CD8-positive, alpha-beta T cell (primary cell): ENCODE measurements at regions of chr6 and their contacts with region 1.

Region 1: DNA sequence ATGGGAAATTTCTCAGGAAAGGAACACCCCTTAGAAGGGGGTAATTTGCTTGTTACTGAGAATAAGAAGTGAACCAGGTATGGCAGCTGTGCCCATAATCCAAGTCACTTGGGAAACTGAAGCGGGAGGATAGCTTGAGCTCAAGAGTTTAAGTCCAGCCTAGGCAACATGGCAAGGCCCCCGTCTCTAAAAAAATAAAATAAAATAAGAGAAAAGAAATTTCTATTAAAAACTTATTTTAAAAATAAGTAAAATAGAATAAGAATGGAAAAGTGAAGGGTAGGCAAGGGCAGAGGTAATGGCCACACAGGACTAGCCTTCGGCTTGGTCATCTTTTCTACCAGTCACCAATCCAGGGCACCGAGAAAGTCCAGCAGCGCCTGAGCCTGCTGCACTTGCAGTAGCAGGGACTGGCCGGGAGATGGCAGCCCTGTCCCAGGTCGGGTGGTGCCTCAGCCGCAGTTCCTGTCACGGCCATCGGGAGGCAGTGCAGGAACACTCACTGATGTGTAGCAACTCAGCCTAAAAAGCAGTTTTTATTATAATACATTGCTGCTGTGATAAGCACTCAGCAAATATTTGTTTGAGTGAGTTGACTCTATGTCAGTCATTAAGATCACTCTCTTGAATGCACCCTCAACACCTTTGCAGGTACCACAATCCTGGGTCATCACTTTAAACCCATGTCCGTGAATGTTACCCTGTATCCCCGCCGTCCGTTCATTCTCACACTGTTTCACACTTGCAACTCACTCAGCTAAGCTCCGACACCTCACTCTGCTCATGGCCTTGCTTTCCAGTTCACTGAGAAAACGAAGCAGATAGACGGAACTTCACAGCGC is 23.2 kb upstream of the GCM1 start:
- DNase-seq: peak; percentile 85 to 97 (median 89)
- ATAC-seq: peak; percentile 100
- H3K4me3 ChIP-seq: no peak overlapping the region
- H3K4me3 Mint-ChIP-seq: no peak overlapping the region
- H3K27ac ChIP-seq: no peak overlapping the region
- H3K27ac Mint-ChIP-seq: no peak overlapping the region
- H3K4me1 ChIP-seq: no peaks in the 10 kb centered on the region
- H3K4me1 Mint-ChIP-seq: no peaks in the 10 kb centered on the region
- H3K27me3 ChIP-seq: no peaks in the 10 kb centered on the region
- H3K27me3 Mint-ChIP-seq: no peaks in the 10 kb centered on the region
- CTCF ChIP-seq: peak; percentile 100

Region 2: DNA sequence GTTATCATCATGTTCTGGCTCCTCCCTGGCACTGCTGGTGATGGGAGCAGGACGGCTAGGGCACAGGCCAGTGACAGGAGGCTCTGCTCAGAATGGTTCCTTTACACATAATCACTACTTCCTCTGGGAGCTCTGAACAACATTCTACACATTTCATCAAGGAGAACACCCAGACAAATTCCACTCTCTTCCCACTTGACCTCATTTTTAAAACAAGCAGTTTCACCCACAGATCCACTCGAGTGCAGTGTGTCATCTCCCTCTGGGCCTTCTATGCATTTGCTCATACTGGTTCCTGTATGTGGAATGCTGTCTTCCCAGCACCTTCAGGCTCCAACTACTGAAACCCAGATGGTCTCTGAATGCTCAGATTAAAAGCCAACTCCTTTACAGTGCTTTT is 92.1 kb after region 1 on chr6:
- CTCF ChIA-PET with region 1: interaction called, 5 read pairs
- POLR2A ChIA-PET with region 1: interaction called, 3 read pairs
- intact Hi-C with region 1: loop called in 1 of 2 experiments (anchors 10 kb)
- DNase-seq: no peak
- ATAC-seq: no peak
- H3K4me3 ChIP-seq: no peak overlapping the region
- H3K4me3 Mint-ChIP-seq: no peak overlapping the region
- H3K27ac ChIP-seq: no peak overlapping the region
- H3K27ac Mint-ChIP-seq: no peak overlapping the region
- H3K4me1 ChIP-seq: no peaks in the 10 kb centered on the region
- H3K4me1 Mint-ChIP-seq: peaks cover 3% of the 10 kb centered on the region
- H3K27me3 ChIP-seq: no peaks in the 10 kb centered on the region
- H3K27me3 Mint-ChIP-seq: no peaks in the 10 kb centered on the region
- CTCF ChIP-seq: no peak

Region 3: DNA sequence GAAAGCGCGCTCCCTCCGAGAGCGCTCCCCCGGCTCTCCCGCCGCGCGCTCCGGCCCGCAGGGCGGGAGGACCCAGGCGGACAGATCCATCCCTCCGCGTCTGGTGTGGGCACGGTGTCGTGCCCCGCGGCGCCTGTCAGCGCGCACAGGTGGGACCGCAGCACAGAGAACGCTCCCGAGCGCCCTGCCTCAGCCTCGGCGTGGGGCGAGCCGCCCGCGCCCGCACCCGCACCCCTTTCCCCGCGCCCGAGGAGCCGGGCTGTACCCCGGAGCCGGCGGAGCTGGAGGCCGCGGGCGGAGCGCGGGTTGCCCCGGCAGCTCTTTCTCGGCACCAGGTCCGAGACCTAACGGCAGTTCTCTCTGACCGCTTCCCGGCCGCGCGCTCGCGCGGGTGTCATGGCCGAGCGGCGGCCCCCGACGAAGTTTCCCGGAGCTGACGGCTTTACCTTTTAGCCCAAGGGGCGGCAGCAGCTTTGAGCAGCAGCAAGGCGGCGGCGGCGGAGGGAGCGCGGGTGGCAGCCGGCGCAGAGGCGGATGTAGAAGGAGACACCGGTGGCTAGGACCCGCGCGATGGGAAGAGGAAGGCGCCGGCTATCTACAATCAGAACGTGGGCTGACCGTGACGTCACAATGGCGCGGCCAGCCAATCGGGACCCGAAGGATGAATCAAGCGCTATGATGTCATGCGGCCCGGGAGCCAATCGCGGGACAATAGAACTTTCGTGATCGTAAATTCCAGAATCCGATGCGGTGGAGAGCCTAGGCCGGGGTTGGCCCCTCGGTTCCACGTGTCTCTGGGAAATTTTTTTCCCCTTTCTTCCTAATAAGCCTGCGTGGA is 176.8 kb after region 1 on chr6 and contains the start of gene ELOVL5:
- CTCF ChIA-PET with region 1: interaction called, 5 read pairs
- POLR2A ChIA-PET with region 1: no interaction called
- intact Hi-C with region 1: loop called in 1 of 2 experiments (anchors 2 kb)
- DNase-seq: peak; percentile 82 to 99 (median 93)
- ATAC-seq: peak; percentile 76
- H3K4me3 ChIP-seq: peak within 1 kb of the TSS; percentile 83 to 91
- H3K4me3 Mint-ChIP-seq: peak within 1 kb of the TSS; percentile 96
- H3K27ac ChIP-seq: peak within 1 kb of the TSS; percentile 80 to 94
- H3K27ac Mint-ChIP-seq: peak within 1 kb of the TSS; percentile 96
- H3K4me1 ChIP-seq: peaks cover 38% of the 10 kb centered on the region
- H3K4me1 Mint-ChIP-seq: peaks cover 48% of the 10 kb centered on the region
- H3K27me3 ChIP-seq: no peaks in the 10 kb centered on the region
- H3K27me3 Mint-ChIP-seq: no peaks in the 10 kb centered on the region
- CTCF ChIP-seq: no peak
- total RNA-seq, gene ELOVL5: 79.1 to 82.7 TPM

Region 4: GRCh38 chr6:53410508-53411258 is 238.9 kb after region 1 on chr6:
- CTCF ChIA-PET with region 1: interaction called, 157 read pairs
- POLR2A ChIA-PET with region 1: interaction called, 5 read pairs
- intact Hi-C with region 1: loop called (anchors 1 kb)
- DNase-seq: peak; percentile 22 to 75 (median 56)
- ATAC-seq: peak; percentile 99
- H3K4me3 ChIP-seq: no peak overlapping the region
- H3K4me3 Mint-ChIP-seq: no peak overlapping the region
- H3K27ac ChIP-seq: no peak overlapping the region
- H3K27ac Mint-ChIP-seq: no peak overlapping the region
- H3K4me1 ChIP-seq: no peaks in the 10 kb centered on the region
- H3K4me1 Mint-ChIP-seq: peaks cover 4% of the 10 kb centered on the region
- H3K27me3 ChIP-seq: peaks cover 0 to 3% of the 10 kb centered on the region in 2 experiments
- H3K27me3 Mint-ChIP-seq: no peaks in the 10 kb centered on the region
- CTCF ChIP-seq: peak; percentile 85

Region 5: GRCh38 chr6:53437557-53438202 is 265.9 kb after region 1 on chr6:
- CTCF ChIA-PET with region 1: interaction called, 34 read pairs
- POLR2A ChIA-PET with region 1: no interaction called
- intact Hi-C with region 1: loop called (anchors 1 kb)
- DNase-seq: peak in 4 of 9 experiments; percentile 4 to 56 (median 28)
- ATAC-seq: no peak
- H3K4me3 ChIP-seq: no peak overlapping the region
- H3K4me3 Mint-ChIP-seq: no peak overlapping the region
- H3K27ac ChIP-seq: no peak overlapping the region
- H3K27ac Mint-ChIP-seq: no peak overlapping the region
- H3K4me1 ChIP-seq: no peaks in the 10 kb centered on the region
- H3K4me1 Mint-ChIP-seq: no peaks in the 10 kb centered on the region
- H3K27me3 ChIP-seq: no peaks in the 10 kb centered on the region
- H3K27me3 Mint-ChIP-seq: peaks cover 4% of the 10 kb centered on the region
- CTCF ChIP-seq: peak; percentile 51

Region 6: GRCh38 chr6:53484476-53485280 is 312.9 kb after region 1 on chr6:
- CTCF ChIA-PET with region 1: interaction called, 159 read pairs
- POLR2A ChIA-PET with region 1: no interaction called
- intact Hi-C with region 1: loop called (anchors 1 kb)
- DNase-seq: peak; percentile 42 to 80 (median 74)
- ATAC-seq: peak; percentile 79
- H3K4me3 ChIP-seq: no peak overlapping the region
- H3K4me3 Mint-ChIP-seq: no peak overlapping the region
- H3K27ac ChIP-seq: no peak overlapping the region
- H3K27ac Mint-ChIP-seq: no peak overlapping the region
- H3K4me1 ChIP-seq: no peaks in the 10 kb centered on the region
- H3K4me1 Mint-ChIP-seq: peaks cover 10% of the 10 kb centered on the region
- H3K27me3 ChIP-seq: peaks cover 0 to 4% of the 10 kb centered on the region in 2 experiments
- H3K27me3 Mint-ChIP-seq: peaks cover 33% of the 10 kb centered on the region
- CTCF ChIP-seq: peak; percentile 98

Region 7: GRCh38 chr6:53725791-53726431 is 554.1 kb after region 1 on chr6:
- CTCF ChIA-PET with region 1: interaction called, 7 read pairs
- POLR2A ChIA-PET with region 1: no interaction called
- intact Hi-C with region 1: loop called (anchors 1 to 5 kb)
- DNase-seq: peak; percentile 47 to 84 (median 78)
- ATAC-seq: peak; percentile 95
- H3K4me3 ChIP-seq: no peak overlapping the region
- H3K4me3 Mint-ChIP-seq: no peak overlapping the region
- H3K27ac ChIP-seq: no peak overlapping the region
- H3K27ac Mint-ChIP-seq: no peak overlapping the region
- H3K4me1 ChIP-seq: peaks cover 3% of the 10 kb centered on the region
- H3K4me1 Mint-ChIP-seq: peaks cover 6% of the 10 kb centered on the region
- H3K27me3 ChIP-seq: peaks cover 0 to 3% of the 10 kb centered on the region in 2 experiments
- H3K27me3 Mint-ChIP-seq: peaks cover 19% of the 10 kb centered on the region
- CTCF ChIP-seq: peak; percentile 88